PC-3 (cell line): ENCODE measurements at regions of chr3 and their contacts with region 1.

Region 1: DNA sequence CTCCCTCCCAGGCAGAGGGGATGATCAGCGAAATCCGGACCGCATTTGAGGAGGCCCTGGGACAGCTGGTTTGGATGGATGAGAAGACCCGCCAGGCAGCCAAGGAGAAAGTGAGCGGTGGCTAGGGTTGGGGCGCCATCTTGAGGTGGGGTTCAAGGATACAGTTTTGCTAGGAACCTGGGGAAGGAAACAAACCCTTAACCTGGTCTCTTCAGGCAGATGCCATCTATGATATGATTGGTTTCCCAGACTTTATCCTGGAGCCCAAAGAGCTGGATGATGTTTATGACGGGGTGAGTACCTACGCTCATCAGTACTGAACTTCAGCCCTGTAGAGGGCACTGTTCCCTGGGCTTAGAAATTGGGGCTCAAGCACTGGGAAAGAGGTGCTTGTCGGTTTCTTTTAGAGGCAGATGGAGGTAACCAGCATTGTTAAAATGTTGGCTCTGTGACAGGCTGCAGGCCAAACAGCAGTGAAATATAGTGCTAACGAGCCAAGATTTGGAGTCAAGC is 9.6 kb upstream of the PSMD2 start:
- DNase-seq: peak; percentile 71
- ATAC-seq: peak; percentile 79
- H3K4me3 ChIP-seq: no peak overlapping the region
- H3K27ac ChIP-seq: no peak overlapping the region
- H3K4me1 ChIP-seq: no peaks in the 10 kb centered on the region
- H3K27me3 ChIP-seq: no peaks in the 10 kb centered on the region
- CTCF ChIP-seq: peak; percentile 92

Region 2: GRCh38 chr3:183884427-183885296 is 404.8 kb before region 1 on chr3 and contains the start of gene PARL:
- CTCF ChIA-PET with region 1: no interaction called
- POLR2A ChIA-PET with region 1: no interaction called
- intact Hi-C with region 1: loop called (anchors 2 kb)
- DNase-seq: peak; percentile 94
- ATAC-seq: peak; percentile 99
- H3K4me3 ChIP-seq: peak within 1 kb of the TSS; percentile 98
- H3K27ac ChIP-seq: peak within 1 kb of the TSS; percentile 35
- H3K4me1 ChIP-seq: peaks cover 12% of the 10 kb centered on the region; the same call in 1 of the 2 replicates
- H3K27me3 ChIP-seq: no peaks in the 10 kb centered on the region
- CTCF ChIP-seq: peak; percentile 91
- total RNA-seq, gene PARL: 66.3 and 69.2 TPM in 2 replicates

Region 3: GRCh38 chr3:184040010-184040409 is 249.5 kb before region 1 on chr3:
- CTCF ChIA-PET with region 1: no interaction called
- POLR2A ChIA-PET with region 1: no interaction called
- intact Hi-C with region 1: loop called (anchors 10 kb)
- DNase-seq: peak; percentile 67
- ATAC-seq: peak; percentile 99
- H3K4me3 ChIP-seq: no peak overlapping the region
- H3K27ac ChIP-seq: no peak overlapping the region
- H3K4me1 ChIP-seq: no peaks in the 10 kb centered on the region
- H3K27me3 ChIP-seq: no peaks in the 10 kb centered on the region; the same call in 1 of the 2 replicates
- CTCF ChIP-seq: peak; percentile 71

Region 4: DNA sequence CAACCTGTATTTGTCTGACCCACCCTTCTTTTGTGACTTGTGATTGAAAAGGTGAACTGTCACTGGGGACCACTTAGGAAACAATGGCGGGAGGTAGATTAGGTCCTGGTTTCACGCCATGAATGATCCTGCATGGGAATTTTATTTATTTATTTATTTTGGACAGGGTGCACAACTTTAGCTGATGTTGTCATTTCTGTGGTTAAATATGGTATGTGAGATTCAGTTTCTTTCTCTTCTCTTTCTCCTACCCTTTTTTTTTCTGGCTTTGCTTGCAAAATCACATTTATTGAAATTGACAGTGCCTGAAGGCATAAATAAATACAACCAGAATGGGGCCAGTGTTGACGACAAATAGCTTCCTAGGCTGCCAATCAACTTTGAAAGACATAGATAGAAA is 210.6 kb before region 1 on chr3:
- CTCF ChIA-PET with region 1: no interaction called
- POLR2A ChIA-PET with region 1: no interaction called
- intact Hi-C with region 1: no loop called
- DNase-seq: no peak
- ATAC-seq: no peak
- H3K4me3 ChIP-seq: no peak overlapping the region
- H3K27ac ChIP-seq: no peak overlapping the region
- H3K4me1 ChIP-seq: no peaks in the 10 kb centered on the region
- H3K27me3 ChIP-seq: no peaks in the 10 kb centered on the region
- CTCF ChIP-seq: no peak

Region 5: DNA sequence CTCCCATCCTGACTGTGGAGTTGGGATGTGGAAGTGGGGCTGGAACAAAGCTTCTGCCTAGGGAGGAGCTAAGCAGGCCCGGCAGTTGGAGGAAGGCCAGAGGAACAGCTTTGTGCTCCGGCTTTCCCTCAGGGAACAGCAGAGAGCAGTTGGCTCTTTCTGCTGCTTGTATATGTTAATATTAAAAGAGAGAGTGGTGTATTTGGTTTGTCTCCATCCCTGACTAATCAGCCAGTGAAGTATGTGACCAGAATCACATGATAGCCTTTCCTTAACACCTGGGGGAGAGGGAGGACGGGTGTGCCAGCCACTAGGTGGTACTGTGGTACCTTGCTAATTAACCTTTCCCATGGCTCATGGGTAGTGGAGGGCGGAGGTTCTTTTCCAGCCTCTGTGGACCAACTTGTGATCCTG is 144.4 kb before region 1 on chr3:
- CTCF ChIA-PET with region 1: no interaction called
- POLR2A ChIA-PET with region 1: no interaction called
- intact Hi-C with region 1: loop called (anchors 1 kb)
- DNase-seq: peak; percentile 72
- ATAC-seq: peak; percentile 92
- H3K4me3 ChIP-seq: no peak overlapping the region
- H3K27ac ChIP-seq: no peak overlapping the region
- H3K4me1 ChIP-seq: no peaks in the 10 kb centered on the region
- H3K27me3 ChIP-seq: no peaks in the 10 kb centered on the region
- CTCF ChIP-seq: peak; percentile 73

Region 6: DNA sequence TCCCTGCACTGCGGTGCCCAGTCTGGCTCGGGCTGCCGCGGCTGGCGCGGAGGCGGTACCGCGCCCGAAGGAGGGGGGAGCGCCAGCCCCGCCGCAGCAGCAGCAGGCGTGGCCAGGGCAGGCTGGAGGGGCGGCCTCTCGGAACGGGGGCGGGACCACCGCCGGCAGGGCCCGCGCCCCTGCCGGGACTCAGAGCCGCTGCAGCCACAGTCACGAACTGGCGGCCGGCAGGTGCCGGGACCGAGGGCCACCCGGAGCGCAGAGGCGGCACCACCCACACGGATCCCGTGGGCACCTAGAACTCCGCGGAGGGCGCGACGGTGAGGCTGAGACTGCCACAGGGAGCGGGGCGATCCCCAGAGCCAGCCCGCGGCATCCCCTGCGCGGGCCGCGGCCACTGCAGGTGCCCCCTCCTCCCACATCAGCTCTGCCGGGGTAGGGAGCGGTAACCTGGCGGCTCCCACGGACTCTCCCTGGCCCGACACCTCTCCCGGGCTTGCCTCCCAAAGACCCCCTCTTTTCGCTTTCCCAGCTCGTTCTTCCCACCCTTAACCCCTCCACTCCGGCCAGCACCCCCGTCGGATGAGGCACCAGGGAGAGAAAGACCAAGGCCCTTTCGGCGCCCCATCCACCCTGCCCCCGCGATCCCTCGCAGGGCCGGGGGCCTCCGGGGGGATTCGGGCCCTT is 59.9 kb before region 1 on chr3 and contains the start of gene VWA5B2:
- CTCF ChIA-PET with region 1: no interaction called
- POLR2A ChIA-PET with region 1: no interaction called
- intact Hi-C with region 1: loop called (anchors 1 kb)
- DNase-seq: peak; percentile 80
- ATAC-seq: peak; percentile 80
- H3K4me3 ChIP-seq: peak within 1 kb of the TSS; percentile 75
- H3K27ac ChIP-seq: no peak within 1 kb of the TSS
- H3K4me1 ChIP-seq: peaks cover 18% of the 10 kb centered on the region
- H3K27me3 ChIP-seq: peaks cover 10% of the 10 kb centered on the region
- CTCF ChIP-seq: no peak
- total RNA-seq, gene VWA5B2: 1.4 and 1.9 TPM in 2 replicates

Region 7: DNA sequence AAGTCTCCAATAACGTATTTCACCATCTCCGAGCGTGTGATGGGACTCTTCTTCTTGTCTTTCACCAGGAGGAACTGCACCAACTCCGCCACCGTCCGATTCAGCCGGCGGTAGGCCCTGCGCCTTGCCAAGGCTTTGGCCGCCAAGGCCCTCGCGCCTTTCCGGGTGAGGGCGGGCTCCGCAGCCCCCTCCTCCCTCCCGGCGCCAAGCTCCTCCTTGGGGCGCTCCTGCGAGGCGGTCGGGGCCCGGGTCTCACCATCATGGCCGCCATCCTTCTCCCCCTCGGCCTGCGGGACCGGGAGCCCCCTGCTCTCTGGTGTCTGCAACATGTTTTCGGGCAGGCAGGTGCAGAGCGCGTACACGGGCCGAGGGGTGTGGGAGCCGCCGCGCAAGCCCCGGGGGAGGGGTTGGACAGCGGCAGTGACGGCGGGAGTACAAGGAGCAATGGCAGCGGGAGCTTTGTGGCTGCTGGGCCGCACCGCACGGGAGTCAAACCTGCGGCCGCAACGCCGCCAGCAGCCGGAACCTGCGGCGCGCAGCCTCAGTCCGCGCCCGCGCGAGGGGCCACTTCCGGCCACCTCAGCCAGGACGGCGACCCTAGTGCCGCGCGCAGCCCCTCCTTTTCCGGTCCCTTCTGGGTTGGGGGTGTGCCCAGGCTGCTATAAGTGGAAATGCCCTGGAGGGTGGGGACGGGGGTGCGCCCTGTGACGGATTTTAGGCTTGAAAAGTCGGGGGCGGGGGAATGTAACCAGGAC is 422.2 kb after region 1 on chr3 and contains the start of gene MAGEF1:
- CTCF ChIA-PET with region 1: no interaction called
- POLR2A ChIA-PET with region 1: no interaction called
- intact Hi-C with region 1: no loop called
- DNase-seq: peak; percentile 80
- ATAC-seq: peak; percentile 85
- H3K4me3 ChIP-seq: peak within 1 kb of the TSS; percentile 96
- H3K27ac ChIP-seq: peak within 1 kb of the TSS; percentile 74
- H3K4me1 ChIP-seq: peaks cover 28% of the 10 kb centered on the region
- H3K27me3 ChIP-seq: no peaks in the 10 kb centered on the region
- CTCF ChIP-seq: no peak
- total RNA-seq, gene MAGEF1: 43.6 and 57.4 TPM in 2 replicates